ENCODE measurements at regions of chr16 and their contacts with region 1.

Region 1: GRCh38 chr16:30091474-30092372 is at the start of gene TBX6:
- DNase-seq: peak; percentile 97
- ATAC-seq: peak; percentile 83
- H3K4me3 Mint-ChIP-seq: peak within 1 kb of the TSS; percentile 84
- H3K27ac Mint-ChIP-seq: peak within 1 kb of the TSS; percentile 92
- H3K4me1 Mint-ChIP-seq: peaks cover 51% of the 10 kb centered on the region
- H3K27me3 Mint-ChIP-seq: no peaks in the 10 kb centered on the region
- total RNA-seq, gene TBX6: 2.7 to 3.0 TPM

Region 2: GRCh38 chr16:29790183-29790952 is 301.4 kb before region 1 on chr16 and contains the start of gene KIF22:
- CTCF ChIA-PET with region 1: no interaction called
- POLR2A ChIA-PET with region 1: no interaction called
- intact Hi-C with region 1: no loop called
- DNase-seq: peak; percentile 100
- ATAC-seq: peak; percentile 95
- H3K4me3 Mint-ChIP-seq: peak within 1 kb of the TSS; percentile 91
- H3K27ac Mint-ChIP-seq: peak within 1 kb of the TSS; percentile 97
- H3K4me1 Mint-ChIP-seq: peaks cover 30% of the 10 kb centered on the region
- H3K27me3 Mint-ChIP-seq: no peaks in the 10 kb centered on the region
- total RNA-seq, gene KIF22: 153 to 168 TPM

Region 3: GRCh38 chr16:29811170-29811895 is 280.4 kb before region 1 on chr16:
- CTCF ChIA-PET with region 1: no interaction called
- POLR2A ChIA-PET with region 1: no interaction called
- intact Hi-C with region 1: no loop called
- DNase-seq: peak; percentile 90
- ATAC-seq: peak; percentile 47
- H3K4me3 Mint-ChIP-seq: peak overlapping the region; percentile 73
- H3K27ac Mint-ChIP-seq: peak overlapping the region; percentile 75
- H3K4me1 Mint-ChIP-seq: peaks cover 58% of the 10 kb centered on the region
- H3K27me3 Mint-ChIP-seq: no peaks in the 10 kb centered on the region

Region 4: GRCh38 chr16:29900102-29900887 is 191.4 kb before region 1 on chr16 and contains the start of gene ASPHD1:
- CTCF ChIA-PET with region 1: no interaction called
- POLR2A ChIA-PET with region 1: no interaction called
- intact Hi-C with region 1: loop called in 1 of 2 experiments (anchors 1 kb)
- DNase-seq: peak; percentile 84
- ATAC-seq: peak; percentile 92
- H3K4me3 Mint-ChIP-seq: peak within 1 kb of the TSS; percentile 74
- H3K27ac Mint-ChIP-seq: peak within 1 kb of the TSS; percentile 38
- H3K4me1 Mint-ChIP-seq: peaks cover 13% of the 10 kb centered on the region
- H3K27me3 Mint-ChIP-seq: peaks cover 21% of the 10 kb centered on the region
- total RNA-seq, gene ASPHD1: 2.7 to 3.2 TPM

Region 5: DNA sequence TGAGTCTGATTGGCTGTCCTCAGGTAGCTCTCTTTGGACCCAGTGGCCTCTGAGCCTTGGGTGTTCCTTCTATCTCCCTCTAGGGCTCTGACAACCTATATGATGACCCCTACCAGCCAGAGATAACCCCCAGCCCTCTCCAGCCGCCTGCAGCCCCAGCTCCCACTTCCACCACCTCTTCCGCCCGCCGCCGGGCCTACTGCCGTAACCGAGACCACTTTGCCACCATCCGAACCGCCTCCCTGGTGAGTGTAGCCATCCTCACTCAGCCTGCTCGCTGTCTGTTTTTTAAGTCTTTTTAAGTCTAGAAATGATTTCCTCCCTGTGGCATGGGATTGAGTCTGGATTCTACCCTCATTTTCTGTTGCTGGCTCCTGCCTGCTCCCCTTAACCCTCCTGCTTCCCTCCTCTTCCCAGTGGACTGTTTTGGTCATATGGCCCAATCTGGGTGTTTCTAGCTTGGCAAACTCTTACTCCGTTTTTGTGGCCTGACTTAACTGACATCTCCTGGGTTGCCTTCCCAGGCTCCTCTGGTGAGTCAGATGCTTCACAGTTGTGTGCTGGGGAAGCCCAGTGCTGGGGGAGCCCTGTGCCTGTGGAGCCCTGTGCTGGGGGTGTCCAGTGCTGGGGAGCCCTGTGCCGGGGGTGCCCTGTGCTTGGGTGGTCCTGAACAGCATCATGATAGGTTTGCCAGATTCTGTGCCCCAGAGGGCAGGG is 108.1 kb before region 1 on chr16:
- CTCF ChIA-PET with region 1: no interaction called
- POLR2A ChIA-PET with region 1: no interaction called
- intact Hi-C with region 1: no loop called
- DNase-seq: no peak
- ATAC-seq: no peak
- H3K4me3 Mint-ChIP-seq: no peak overlapping the region
- H3K27ac Mint-ChIP-seq: no peak overlapping the region
- H3K4me1 Mint-ChIP-seq: no peaks in the 10 kb centered on the region
- H3K27me3 Mint-ChIP-seq: no peaks in the 10 kb centered on the region

Region 6: GRCh38 chr16:29995911-29996772 is 95.6 kb before region 1 on chr16 and contains the start of gene INO80E:
- CTCF ChIA-PET with region 1: no interaction called
- POLR2A ChIA-PET with region 1: no interaction called
- intact Hi-C with region 1: loop called in 1 of 2 experiments (anchors 1 kb)
- DNase-seq: peak; percentile 100
- ATAC-seq: peak; percentile 98
- H3K4me3 Mint-ChIP-seq: peak within 1 kb of the TSS; percentile 96
- H3K27ac Mint-ChIP-seq: peak within 1 kb of the TSS; percentile 98
- H3K4me1 Mint-ChIP-seq: peaks cover 25% of the 10 kb centered on the region
- H3K27me3 Mint-ChIP-seq: no peaks in the 10 kb centered on the region
- total RNA-seq, gene INO80E: 80.1 to 106 TPM

Region 7: DNA sequence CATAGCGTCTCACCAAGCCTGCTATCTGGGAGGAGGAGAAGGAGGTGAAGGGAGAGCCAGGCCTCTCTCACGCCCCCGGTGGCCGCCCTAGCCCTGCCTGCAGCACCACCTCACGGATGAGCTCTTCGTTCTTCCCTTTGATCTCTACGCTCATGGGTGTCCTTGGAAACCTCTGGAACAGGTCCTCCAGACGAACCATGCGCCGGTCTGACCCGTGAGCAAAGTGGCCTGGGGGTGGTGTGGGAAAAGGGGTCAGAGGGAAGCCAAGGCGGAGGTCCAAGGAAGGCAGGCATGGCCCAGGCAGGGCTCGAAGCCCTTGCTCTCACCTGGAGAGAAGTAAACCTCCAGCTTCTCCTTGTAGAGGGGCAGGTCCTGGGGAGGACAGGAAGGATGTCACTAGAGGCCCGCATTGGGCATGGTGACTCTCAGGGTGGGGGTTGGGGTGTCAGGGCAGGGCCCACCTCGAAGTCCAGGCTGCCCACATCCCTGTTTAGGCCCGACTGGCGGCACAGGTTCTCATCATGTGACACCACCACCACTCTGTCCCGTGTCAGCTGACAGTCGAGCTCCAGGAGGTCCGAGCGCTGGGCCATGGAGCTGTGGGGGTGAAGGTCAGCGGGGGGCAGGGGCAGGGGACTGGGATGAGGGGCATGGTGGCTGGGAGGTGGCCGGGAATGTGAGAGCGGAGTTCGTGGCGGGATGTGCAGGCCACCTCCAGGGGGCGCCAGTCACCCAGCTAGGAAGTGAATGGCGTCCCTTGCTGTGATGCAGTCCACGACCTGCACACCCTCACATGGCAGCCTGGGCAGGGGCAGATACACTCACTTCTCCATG is 20.7 kb after region 1 on chr16:
- CTCF ChIA-PET with region 1: interaction called, 31 read pairs
- POLR2A ChIA-PET with region 1: interaction called, 3 read pairs
- intact Hi-C with region 1: no loop called
- DNase-seq: peak; percentile 85
- ATAC-seq: peak; percentile 80
- H3K4me3 Mint-ChIP-seq: no peak overlapping the region
- H3K27ac Mint-ChIP-seq: no peak overlapping the region
- H3K4me1 Mint-ChIP-seq: peaks cover 6% of the 10 kb centered on the region
- H3K27me3 Mint-ChIP-seq: no peaks in the 10 kb centered on the region

Region 8: GRCh38 chr16:30183233-30184095 is 91.7 kb after region 1 on chr16 and contains the start of gene CORO1A:
- CTCF ChIA-PET with region 1: interaction called, 9 read pairs
- POLR2A ChIA-PET with region 1: interaction called, 7 read pairs
- intact Hi-C with region 1: loop called in 1 of 2 experiments (anchors 1 kb)
- DNase-seq: peak; percentile 95
- ATAC-seq: peak; percentile 53
- H3K4me3 Mint-ChIP-seq: peak within 1 kb of the TSS; percentile 91
- H3K27ac Mint-ChIP-seq: peak within 1 kb of the TSS; percentile 99
- H3K4me1 Mint-ChIP-seq: peaks cover 23% of the 10 kb centered on the region
- H3K27me3 Mint-ChIP-seq: no peaks in the 10 kb centered on the region
- total RNA-seq, gene CORO1A: 997 to 1,175 TPM

Region 9: DNA sequence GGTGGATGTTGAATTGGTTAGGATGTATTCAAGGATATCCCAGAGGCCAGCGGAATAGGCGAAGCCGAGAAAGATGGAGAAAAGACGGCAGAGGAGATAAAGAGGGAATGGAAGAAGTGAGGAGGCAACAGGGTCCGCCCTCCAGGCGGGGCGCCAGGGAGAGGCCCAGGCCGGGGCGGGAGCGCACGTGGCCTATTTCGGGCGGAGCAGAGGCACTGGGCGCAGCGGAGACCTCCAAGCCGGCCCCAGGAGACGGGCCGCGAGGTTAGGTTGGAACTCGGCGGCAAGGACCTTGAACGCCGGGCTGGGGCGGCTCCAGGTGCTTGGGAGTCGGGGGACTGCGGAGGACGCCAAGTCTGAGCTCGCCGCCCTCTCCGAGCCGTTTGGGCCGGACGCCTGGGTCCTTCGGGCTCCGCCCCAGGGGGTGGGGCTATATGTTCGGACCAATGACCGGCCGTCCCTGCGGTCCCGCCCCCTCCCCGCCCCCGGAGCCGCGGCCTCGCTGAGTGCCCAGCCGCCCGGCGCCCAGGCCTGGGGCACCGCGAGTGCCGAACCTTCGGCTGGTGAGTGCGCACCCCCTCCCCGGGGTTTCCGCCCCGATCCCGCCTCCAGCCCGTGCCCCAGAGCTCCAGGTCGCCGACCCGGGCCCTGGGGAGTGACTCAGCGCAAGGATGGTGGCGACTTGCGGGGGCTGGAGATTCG is 315.5 kb after region 1 on chr16 and contains the start of gene ZNF771:
- CTCF ChIA-PET with region 1: interaction called, 3 read pairs
- POLR2A ChIA-PET with region 1: no interaction called
- intact Hi-C with region 1: loop called in 1 of 2 experiments (anchors 5 kb)
- DNase-seq: peak; percentile 95
- ATAC-seq: peak; percentile 85
- H3K4me3 Mint-ChIP-seq: peak within 1 kb of the TSS; percentile 79
- H3K27ac Mint-ChIP-seq: peak within 1 kb of the TSS; percentile 97
- H3K4me1 Mint-ChIP-seq: peaks cover 26% of the 10 kb centered on the region
- H3K27me3 Mint-ChIP-seq: peaks cover 2% of the 10 kb centered on the region
- total RNA-seq, gene ZNF771: 3.8 to 4.0 TPM

Region 10: GRCh38 chr16:30557957-30558788 is 466.4 kb after region 1 on chr16 and contains the start of gene ZNF764:
- CTCF ChIA-PET with region 1: no interaction called
- POLR2A ChIA-PET with region 1: no interaction called
- intact Hi-C with region 1: loop called in 1 of 2 experiments (anchors 10 kb)
- DNase-seq: peak; percentile 99
- ATAC-seq: peak; percentile 96
- H3K4me3 Mint-ChIP-seq: peak within 1 kb of the TSS; percentile 85
- H3K27ac Mint-ChIP-seq: peak within 1 kb of the TSS; percentile 94
- H3K4me1 Mint-ChIP-seq: peaks cover 44% of the 10 kb centered on the region
- H3K27me3 Mint-ChIP-seq: no peaks in the 10 kb centered on the region
- total RNA-seq, gene ZNF764: 8.0 to 11.2 TPM